Heart left ventricle (tissue), 16 donors: ENCODE measurements at regions of chr16 and their contacts with region 1.

Region 1: DNA sequence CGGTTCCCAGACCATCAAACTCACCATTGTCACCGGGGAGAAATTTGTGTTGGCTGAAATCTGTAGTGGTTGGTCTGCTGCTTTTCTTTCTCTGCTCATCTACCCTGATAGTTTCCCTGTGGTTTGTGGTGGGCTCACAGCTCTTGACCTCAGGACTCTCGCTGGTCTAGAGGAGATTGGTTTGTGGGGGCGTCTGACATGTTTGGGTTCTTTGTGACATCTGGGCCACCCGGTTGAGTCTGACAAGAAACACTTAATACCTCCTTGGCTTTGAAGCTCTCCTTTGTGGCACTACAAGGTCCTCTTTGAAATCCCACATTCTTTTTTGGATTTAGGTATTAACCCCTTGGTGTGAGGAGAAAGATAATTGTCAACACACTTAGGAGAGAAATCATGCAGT is 662.0 kb downstream of the WWOX start:
- DNase-seq: no peak
- ATAC-seq: no peak
- H3K4me3 ChIP-seq: no peak overlapping the region
- H3K27ac ChIP-seq: no peak overlapping the region
- H3K4me1 ChIP-seq: peaks cover 0 to 4% (median 0%) of the 10 kb centered on the region in 12 donors
- H3K27me3 ChIP-seq: no peaks in the 10 kb centered on the region
- CTCF ChIP-seq: no peak
- POLR2A ChIP-seq: no peak

Region 2: DNA sequence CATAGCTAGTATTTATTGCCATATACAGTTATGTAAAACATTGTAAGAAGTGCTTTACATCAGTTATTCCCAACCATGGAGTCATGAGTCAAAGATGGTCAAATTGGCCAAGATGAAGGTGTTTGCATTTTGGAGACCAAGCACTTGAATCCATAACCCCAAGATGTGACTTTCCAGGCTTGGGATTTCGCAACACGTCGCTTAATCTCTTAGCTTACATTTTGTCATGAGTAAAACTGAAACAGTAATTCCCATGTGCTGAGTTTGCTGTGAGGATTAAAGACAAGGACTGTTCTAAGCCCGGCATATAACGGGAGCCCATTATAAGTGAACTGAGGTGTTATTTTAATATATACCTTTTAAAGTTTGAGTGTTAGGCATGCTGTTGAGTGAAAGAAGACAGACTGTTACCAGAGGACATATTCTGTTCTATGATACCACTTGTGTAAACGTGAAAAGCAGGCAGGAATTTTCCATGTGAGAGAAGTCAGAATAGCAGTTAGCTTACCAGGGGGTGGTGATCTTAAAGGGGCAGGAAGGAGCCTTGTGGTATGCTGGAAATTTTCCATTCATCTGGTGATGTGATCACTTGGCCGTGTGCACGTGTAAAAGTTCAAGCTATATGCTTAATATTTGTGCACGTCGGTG is 177.1 kb before region 1 on chr16:
- intact Hi-C with region 1: loop called in 1 of 10 experiments (anchors 10 kb)
- DNase-seq: no peak
- ATAC-seq: peak in 3 of 4 donors; percentile 26 to 70 (median 51)
- H3K4me3 ChIP-seq: no peak overlapping the region
- H3K27ac ChIP-seq: no peak overlapping the region
- H3K4me1 ChIP-seq: peaks cover 0 to 10% (median 0%) of the 10 kb centered on the region in 12 donors
- H3K27me3 ChIP-seq: no peaks in the 10 kb centered on the region
- CTCF ChIP-seq: no peak
- POLR2A ChIP-seq: no peak

Region 3: GRCh38 chr16:78609402-78610274 is 151.8 kb before region 1 on chr16:
- intact Hi-C with region 1: loop called in 1 of 10 experiments (anchors 10 kb)
- DNase-seq: no peak
- ATAC-seq: no peak
- H3K4me3 ChIP-seq: peak overlapping the region in 6 of 12 donors; percentile 5 to 47 (median 40)
- H3K27ac ChIP-seq: peak overlapping the region in 1 of 12 donors; percentile 62
- H3K4me1 ChIP-seq: peaks cover 0 to 28% (median 5%) of the 10 kb centered on the region in 12 donors
- H3K27me3 ChIP-seq: no peaks in the 10 kb centered on the region
- CTCF ChIP-seq: no peak
- POLR2A ChIP-seq: no peak

Region 4: GRCh38 chr16:78669994-78670393 is 91.4 kb before region 1 on chr16:
- intact Hi-C with region 1: loop called in 1 of 10 experiments (anchors 10 kb)
- DNase-seq: peak in 4 of 5 donors; percentile 60 to 76 (median 72)
- ATAC-seq: peak; percentile 66 to 94 (median 80)
- H3K4me3 ChIP-seq: no peak overlapping the region
- H3K27ac ChIP-seq: peak overlapping the region in 10 of 12 donors; percentile 19 to 80 (median 59)
- H3K4me1 ChIP-seq: peaks cover 0 to 22% (median 8%) of the 10 kb centered on the region in 12 donors
- H3K27me3 ChIP-seq: no peaks in the 10 kb centered on the region
- CTCF ChIP-seq: no peak
- POLR2A ChIP-seq: no peak

Region 5: GRCh38 chr16:78718141-78718540 is 43.3 kb before region 1 on chr16:
- intact Hi-C with region 1: no loop called
- DNase-seq: no peak
- ATAC-seq: no peak
- H3K4me3 ChIP-seq: no peak overlapping the region
- H3K27ac ChIP-seq: no peak overlapping the region
- H3K4me1 ChIP-seq: no peaks in the 10 kb centered on the region
- H3K27me3 ChIP-seq: no peaks in the 10 kb centered on the region
- CTCF ChIP-seq: no peak
- POLR2A ChIP-seq: no peak

Region 6: GRCh38 chr16:78976212-78976611 is 214.8 kb after region 1 on chr16:
- intact Hi-C with region 1: no loop called
- DNase-seq: no peak
- ATAC-seq: no peak
- H3K4me3 ChIP-seq: no peak overlapping the region
- H3K27ac ChIP-seq: no peak overlapping the region
- H3K4me1 ChIP-seq: no peaks in the 10 kb centered on the region
- H3K27me3 ChIP-seq: no peaks in the 10 kb centered on the region
- CTCF ChIP-seq: no peak
- POLR2A ChIP-seq: no peak